Mammary epithelial cell (primary cell): ENCODE measurements at regions of chr2 and their contacts with region 1.

Region 1: DNA sequence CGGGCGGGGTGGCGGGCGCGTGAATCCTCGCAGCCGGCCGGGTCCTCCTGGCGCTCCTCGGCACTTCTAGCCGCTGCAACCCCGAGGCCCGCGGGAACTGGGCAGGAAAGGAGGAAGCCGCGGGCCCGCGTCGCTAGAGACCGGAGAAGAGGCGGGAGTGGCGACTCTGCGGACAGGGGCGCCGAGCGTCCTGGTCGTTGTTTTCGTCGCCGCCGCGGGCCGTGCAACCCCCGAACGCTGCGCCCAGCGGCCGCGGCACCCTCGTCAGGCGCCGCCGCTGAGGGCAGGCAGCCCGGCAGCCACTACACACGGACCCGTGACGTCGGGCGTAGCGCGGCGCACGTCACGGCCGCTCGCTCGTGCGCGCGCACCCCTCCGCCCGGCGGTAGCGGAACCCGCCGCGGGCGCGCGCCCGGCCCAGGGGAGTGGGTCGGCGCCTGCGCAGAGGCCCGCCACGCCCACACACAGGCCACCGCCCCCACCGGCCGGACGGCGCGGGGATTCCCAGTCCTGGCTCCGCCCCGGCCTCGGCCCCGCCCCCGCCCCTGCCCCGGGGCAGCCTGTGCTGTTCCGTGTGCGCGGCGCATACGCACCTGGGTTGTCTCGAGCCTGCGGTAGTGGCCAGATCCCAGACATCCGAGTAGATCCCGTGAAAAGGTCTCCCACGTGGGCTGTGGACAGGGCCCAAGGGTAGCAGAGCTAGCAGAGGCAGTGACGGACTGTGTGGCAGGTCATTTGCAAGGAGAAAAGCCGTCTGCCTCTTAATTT is at the start of gene MAP3K2:
- DNase-seq: peak; percentile 91
- H3K4me3 ChIP-seq: peak within 1 kb of the TSS; percentile 54 to 90 (median 76)
- H3K27ac ChIP-seq: peak within 1 kb of the TSS; percentile 95
- H3K4me1 ChIP-seq: peaks cover 18% of the 10 kb centered on the region
- H3K27me3 ChIP-seq: no peaks in the 10 kb centered on the region
- CTCF ChIP-seq: no peak
- total RNA-seq, gene MAP3K2: 50.4 to 65.5 TPM

Region 2: GRCh38 chr2:127231130-127231865 is 156.5 kb before region 1 on chr2:
- CTCF ChIA-PET with region 1: no interaction called
- dilution Hi-C with region 1: no loop called
- in situ Hi-C with region 1: no loop called
- intact Hi-C with region 1: no loop called
- DNase-seq: no peak
- H3K4me3 ChIP-seq: no peak overlapping the region
- H3K27ac ChIP-seq: no peak overlapping the region
- H3K4me1 ChIP-seq: peaks cover 4% of the 10 kb centered on the region
- H3K27me3 ChIP-seq: no peaks in the 10 kb centered on the region
- CTCF ChIP-seq: no peak

Region 3: GRCh38 chr2:127407661-127408003 is 19.8 kb after region 1 on chr2:
- CTCF ChIA-PET with region 1: no interaction called
- dilution Hi-C with region 1: no loop called
- in situ Hi-C with region 1: no loop called
- intact Hi-C with region 1: loop called (anchors 2 kb)
- DNase-seq: no peak
- H3K4me3 ChIP-seq: peak overlapping the region in 1 of 3 experiments; percentile 7
- H3K27ac ChIP-seq: no peak overlapping the region
- H3K4me1 ChIP-seq: peaks cover 39% of the 10 kb centered on the region
- H3K27me3 ChIP-seq: no peaks in the 10 kb centered on the region
- CTCF ChIP-seq: no peak

Region 4: GRCh38 chr2:127486247-127487058 is 98.6 kb after region 1 on chr2:
- CTCF ChIA-PET with region 1: no interaction called
- dilution Hi-C with region 1: no loop called
- in situ Hi-C with region 1: no loop called
- intact Hi-C with region 1: no loop called
- DNase-seq: no peak
- H3K4me3 ChIP-seq: no peak overlapping the region
- H3K27ac ChIP-seq: no peak overlapping the region
- H3K4me1 ChIP-seq: no peaks in the 10 kb centered on the region
- H3K27me3 ChIP-seq: no peaks in the 10 kb centered on the region
- CTCF ChIP-seq: no peak

Region 5: DNA sequence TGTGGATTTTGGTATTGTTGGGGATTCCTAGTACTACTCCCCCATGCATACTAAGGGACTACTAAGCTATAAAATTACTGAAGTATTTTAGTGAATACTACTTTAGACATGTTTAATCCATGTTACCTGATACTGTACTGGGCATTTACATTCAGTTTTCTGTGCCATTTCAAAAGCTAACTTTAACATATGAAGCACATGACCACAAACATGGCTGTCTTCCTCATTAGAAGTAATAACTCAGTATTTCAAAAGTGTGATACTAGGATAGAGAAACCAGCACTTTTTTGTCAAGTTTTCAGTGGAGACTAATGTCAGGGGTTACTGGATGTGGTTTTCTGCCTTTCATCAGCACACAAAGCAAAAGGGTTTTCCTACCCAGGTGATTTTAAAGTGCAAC is 395.3 kb after region 1 on chr2:
- CTCF ChIA-PET with region 1: no interaction called
- dilution Hi-C with region 1: no loop called
- in situ Hi-C with region 1: no loop called
- intact Hi-C with region 1: no loop called
- DNase-seq: no peak
- H3K4me3 ChIP-seq: no peak overlapping the region
- H3K27ac ChIP-seq: no peak overlapping the region
- H3K4me1 ChIP-seq: no peaks in the 10 kb centered on the region
- H3K27me3 ChIP-seq: no peaks in the 10 kb centered on the region
- CTCF ChIP-seq: no peak

Region 6: GRCh38 chr2:127820080-127820668 is 432.3 kb after region 1 on chr2:
- CTCF ChIA-PET with region 1: no interaction called
- dilution Hi-C with region 1: no loop called
- in situ Hi-C with region 1: no loop called
- intact Hi-C with region 1: no loop called
- DNase-seq: no peak
- H3K4me3 ChIP-seq: no peak overlapping the region
- H3K27ac ChIP-seq: no peak overlapping the region
- H3K4me1 ChIP-seq: no peaks in the 10 kb centered on the region
- H3K27me3 ChIP-seq: no peaks in the 10 kb centered on the region
- CTCF ChIP-seq: no peak